Ovary (tissue), 10 donors: ENCODE measurements at regions of chr11 and their contacts with region 1.

Region 1: GRCh38 chr11:125224391-125225010 is 60.0 kb downstream of the PKNOX2 start:
- DNase-seq: peak; percentile 48 to 71 (median 58)
- H3K4me3 ChIP-seq: no peak overlapping the region
- H3K27ac ChIP-seq: peak overlapping the region; percentile 16 to 54
- H3K4me1 ChIP-seq: peaks cover 12% of the 10 kb centered on the region
- H3K27me3 ChIP-seq: no peaks in the 10 kb centered on the region
- CTCF ChIP-seq: peak in 2 of 3 donors; percentile 31 to 44
- EP300 ChIP-seq: no peak
- POLR2A ChIP-seq: no peak

Region 2: DNA sequence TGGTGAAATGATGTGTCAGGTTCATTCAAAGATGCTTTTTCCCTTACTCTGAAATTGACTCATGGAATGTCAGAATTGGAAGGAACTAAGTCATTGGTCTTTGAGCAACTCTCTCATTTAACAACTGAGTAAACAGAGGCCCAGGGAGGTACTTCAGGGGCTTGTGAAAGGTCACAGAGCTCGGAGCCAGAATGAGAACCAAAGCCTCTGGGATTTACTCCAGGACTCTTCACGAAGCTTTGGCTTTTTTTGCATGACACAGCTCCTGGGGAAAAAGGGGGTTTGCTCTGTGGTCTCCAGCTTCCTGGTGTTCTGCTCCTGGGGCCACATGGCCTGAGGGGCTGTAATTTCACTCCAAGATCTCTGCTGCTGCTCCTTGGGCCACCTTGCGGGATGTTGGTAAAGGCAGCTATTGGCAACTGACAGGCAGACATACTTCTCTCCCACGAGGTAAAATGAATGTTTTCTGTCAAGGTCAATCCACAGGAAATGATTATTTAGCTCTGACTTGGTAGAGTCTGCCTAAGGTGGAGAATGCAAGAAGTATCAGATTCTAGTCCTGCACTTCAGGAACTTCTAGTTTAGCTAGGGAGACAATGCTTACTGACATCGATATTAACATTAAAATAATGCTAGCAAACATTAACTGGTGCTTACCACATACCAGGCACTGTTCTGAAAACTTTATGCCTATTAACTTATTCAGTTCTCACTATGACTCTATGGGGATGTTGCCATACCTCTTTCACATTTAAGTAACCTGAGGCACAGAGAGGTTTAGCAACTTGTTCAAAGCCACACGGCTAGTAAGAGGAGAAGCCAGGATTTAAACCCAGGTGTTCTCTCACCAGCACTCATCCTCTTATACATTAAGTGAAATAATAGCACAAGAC is 43.8 kb before region 1 on chr11:
- intact Hi-C with region 1: loop called in 1 of 4 experiments (anchors 5 kb)
- DNase-seq: no peak
- H3K4me3 ChIP-seq: no peak overlapping the region
- H3K27ac ChIP-seq: no peak overlapping the region
- H3K4me1 ChIP-seq: peaks cover 6% of the 10 kb centered on the region
- H3K27me3 ChIP-seq: no peaks in the 10 kb centered on the region
- CTCF ChIP-seq: no peak
- EP300 ChIP-seq: no peak
- POLR2A ChIP-seq: no peak

Region 3: GRCh38 chr11:125345421-125346178 is 121.1 kb after region 1 on chr11:
- intact Hi-C with region 1: loop called in 1 of 4 experiments (anchors 10 kb)
- DNase-seq: peak; percentile 84 to 93 (median 91)
- H3K4me3 ChIP-seq: no peak overlapping the region
- H3K27ac ChIP-seq: peak overlapping the region; percentile 44 to 68
- H3K4me1 ChIP-seq: peaks cover 15% of the 10 kb centered on the region
- H3K27me3 ChIP-seq: no peaks in the 10 kb centered on the region
- CTCF ChIP-seq: peak; percentile 84 to 94 (median 87)
- EP300 ChIP-seq: no peak
- POLR2A ChIP-seq: no peak

Region 4: GRCh38 chr11:125496529-125496857 is 272.0 kb after region 1 on chr11:
- intact Hi-C with region 1: no loop called
- DNase-seq: peak in 4 of 5 donors; percentile 23 to 49 (median 37)
- H3K4me3 ChIP-seq: peak overlapping the region; percentile 80
- H3K27ac ChIP-seq: peak overlapping the region; percentile 76 to 77
- H3K4me1 ChIP-seq: peaks cover 5% of the 10 kb centered on the region
- H3K27me3 ChIP-seq: no peaks in the 10 kb centered on the region
- CTCF ChIP-seq: no peak
- EP300 ChIP-seq: no peak
- POLR2A ChIP-seq: no peak

Region 5: DNA sequence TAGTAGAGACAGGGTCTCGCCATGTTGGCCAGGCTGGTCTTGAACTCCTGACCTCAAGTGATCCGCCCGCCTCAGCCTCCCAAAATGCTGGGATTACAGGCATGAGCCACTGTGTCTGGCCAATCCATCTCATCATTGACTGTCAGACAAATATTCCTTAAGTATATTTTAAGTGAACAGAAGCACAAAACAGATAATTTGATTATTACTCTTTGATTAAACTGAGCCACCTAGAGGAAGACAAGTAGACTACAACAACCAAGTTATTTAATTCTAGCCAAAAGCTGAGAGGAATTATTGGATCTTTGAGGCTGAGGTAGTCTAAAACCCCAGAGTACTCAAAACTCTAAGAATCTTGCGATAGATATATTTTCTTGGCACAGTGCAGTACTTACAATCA is 454.9 kb after region 1 on chr11:
- intact Hi-C with region 1: no loop called
- DNase-seq: no peak
- H3K4me3 ChIP-seq: no peak overlapping the region
- H3K27ac ChIP-seq: no peak overlapping the region
- H3K4me1 ChIP-seq: peaks cover 1% of the 10 kb centered on the region
- H3K27me3 ChIP-seq: no peaks in the 10 kb centered on the region
- CTCF ChIP-seq: no peak
- EP300 ChIP-seq: no peak
- POLR2A ChIP-seq: no peak